Adrenal gland (tissue), 19 donors: ENCODE measurements at regions of chr10 and their contacts with region 1.

Region 1: GRCh38 chr10:122703439-122704118 is 3.9 kb upstream of the C10orf120 start:
- DNase-seq: peak; percentile 61 to 80 (median 69)
- H3K4me3 ChIP-seq: no peak overlapping the region
- H3K27ac ChIP-seq: no peak overlapping the region
- H3K4me1 ChIP-seq: no peaks in the 10 kb centered on the region
- H3K27me3 ChIP-seq: no peaks in the 10 kb centered on the region
- CTCF ChIP-seq: peak; percentile 65 to 82 (median 76)
- POLR2A ChIP-seq: no peak

Region 2: DNA sequence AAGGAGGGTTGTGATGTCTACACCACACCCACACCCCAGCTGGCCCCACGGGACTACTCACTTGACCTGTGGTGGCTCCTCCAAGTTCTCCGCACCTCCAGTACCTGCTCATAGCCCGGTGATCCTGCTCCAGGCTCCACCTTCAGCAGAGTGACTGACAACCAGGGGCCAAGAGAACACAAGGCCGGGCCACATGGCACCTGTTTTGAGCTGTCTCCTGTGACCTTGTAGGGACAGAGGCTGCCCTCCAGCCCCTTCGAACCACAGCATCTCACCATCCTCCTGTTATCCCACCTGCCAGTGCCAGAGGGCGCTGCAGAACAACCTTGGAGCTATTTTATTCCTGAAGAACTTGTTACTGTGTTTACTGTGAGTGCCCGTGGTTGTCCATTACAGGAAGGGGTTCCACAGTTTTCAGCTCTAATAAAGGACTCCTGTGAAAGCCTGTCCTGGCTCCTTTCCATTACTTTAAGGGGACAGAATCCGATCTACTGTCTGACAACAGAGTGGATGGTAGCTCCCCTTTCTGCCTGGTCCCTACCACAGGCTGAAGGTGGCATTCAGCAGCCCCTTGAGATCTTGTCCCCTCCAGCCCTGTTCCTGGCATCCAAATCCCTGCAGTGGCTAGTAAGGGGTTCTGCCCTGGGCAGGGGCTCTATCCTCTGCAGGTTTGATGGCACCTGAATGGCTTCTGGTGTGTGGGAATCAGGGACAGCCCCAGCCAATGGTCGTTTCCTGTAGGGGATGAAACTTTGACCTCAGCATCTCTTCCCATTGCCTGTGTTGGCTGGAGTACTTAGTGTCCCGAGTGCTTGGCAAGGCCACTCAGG is 54.8 kb before region 1 on chr10:
- intact Hi-C with region 1: loop called (anchors 2 to 5 kb)
- DNase-seq: peak; percentile 15 to 71 (median 49)
- H3K4me3 ChIP-seq: no peak overlapping the region
- H3K27ac ChIP-seq: no peak overlapping the region
- H3K4me1 ChIP-seq: no peaks in the 10 kb centered on the region
- H3K27me3 ChIP-seq: no peaks in the 10 kb centered on the region
- CTCF ChIP-seq: peak; percentile 46 to 71 (median 65)
- POLR2A ChIP-seq: no peak